AG04450 (cell line): ENCODE measurements at regions of chr6 and their contacts with region 1.

Region 1: GRCh38 chr6:18595774-18596530 is 208.8 kb downstream of the RNF144B start:
- DNase-seq: peak; percentile 36
- H3K4me3 ChIP-seq: no peak overlapping the region
- H3K27ac ChIP-seq: no peak overlapping the region
- H3K27me3 ChIP-seq: no peaks in the 10 kb centered on the region
- CTCF ChIP-seq: peak; percentile 99

Region 2: GRCh38 chr6:18503593-18504231 is 92.2 kb before region 1 on chr6:
- CTCF ChIA-PET with region 1: no interaction called
- POLR2A ChIA-PET with region 1: no interaction called
- DNase-seq: peak; percentile 66
- H3K4me3 ChIP-seq: no peak overlapping the region
- H3K27ac ChIP-seq: no peak overlapping the region
- H3K27me3 ChIP-seq: no peaks in the 10 kb centered on the region
- CTCF ChIP-seq: peak; percentile 99

Region 3: DNA sequence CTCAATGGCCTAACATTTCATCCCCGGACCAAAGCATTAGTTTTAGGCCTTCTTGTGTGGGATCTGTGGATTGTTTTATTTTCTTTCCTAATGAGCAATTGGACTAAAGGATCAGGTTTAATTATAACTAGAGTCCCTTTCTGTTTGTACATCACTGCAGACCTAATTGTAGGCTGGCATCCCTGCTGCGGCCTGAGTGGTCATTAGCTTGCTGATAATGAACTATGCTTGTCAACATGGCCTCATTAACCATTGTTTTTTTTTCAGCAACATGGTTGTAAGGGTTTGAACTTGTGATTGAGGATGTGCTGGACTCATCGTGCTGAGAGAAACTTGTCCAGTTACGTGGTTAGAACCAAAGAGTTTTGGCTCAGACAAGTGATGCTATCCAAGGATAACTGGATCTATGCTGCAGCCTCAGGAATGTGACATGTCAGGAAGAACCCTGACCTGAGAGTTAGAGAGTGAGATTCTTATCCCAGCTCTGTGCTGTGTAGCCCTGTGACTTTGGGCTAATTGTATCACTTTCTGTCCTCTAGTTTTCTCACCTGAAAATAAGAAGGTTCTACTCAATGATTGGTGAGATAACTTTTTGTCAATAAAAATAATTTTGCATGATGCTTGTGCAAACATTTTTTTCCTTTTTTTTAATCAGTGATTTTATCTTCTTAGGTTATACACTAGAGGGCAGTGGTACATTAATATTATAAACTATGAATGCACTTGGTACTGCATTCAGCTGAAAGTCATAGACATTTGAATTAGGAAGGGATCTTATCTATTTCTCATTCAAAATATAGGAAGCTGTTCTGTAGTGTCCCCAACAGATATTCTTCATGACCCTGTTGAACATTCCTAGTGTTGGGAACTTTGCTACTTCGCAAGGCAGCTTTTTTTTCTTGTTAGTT is 67.9 kb before region 1 on chr6:
- CTCF ChIA-PET with region 1: interaction called, 14 read pairs
- POLR2A ChIA-PET with region 1: no interaction called
- DNase-seq: no peak
- H3K4me3 ChIP-seq: no peak overlapping the region
- H3K27ac ChIP-seq: no peak overlapping the region
- H3K27me3 ChIP-seq: peaks cover 2% of the 10 kb centered on the region
- CTCF ChIP-seq: peak; percentile 28; the same call in 1 of the 2 replicates

Region 4: DNA sequence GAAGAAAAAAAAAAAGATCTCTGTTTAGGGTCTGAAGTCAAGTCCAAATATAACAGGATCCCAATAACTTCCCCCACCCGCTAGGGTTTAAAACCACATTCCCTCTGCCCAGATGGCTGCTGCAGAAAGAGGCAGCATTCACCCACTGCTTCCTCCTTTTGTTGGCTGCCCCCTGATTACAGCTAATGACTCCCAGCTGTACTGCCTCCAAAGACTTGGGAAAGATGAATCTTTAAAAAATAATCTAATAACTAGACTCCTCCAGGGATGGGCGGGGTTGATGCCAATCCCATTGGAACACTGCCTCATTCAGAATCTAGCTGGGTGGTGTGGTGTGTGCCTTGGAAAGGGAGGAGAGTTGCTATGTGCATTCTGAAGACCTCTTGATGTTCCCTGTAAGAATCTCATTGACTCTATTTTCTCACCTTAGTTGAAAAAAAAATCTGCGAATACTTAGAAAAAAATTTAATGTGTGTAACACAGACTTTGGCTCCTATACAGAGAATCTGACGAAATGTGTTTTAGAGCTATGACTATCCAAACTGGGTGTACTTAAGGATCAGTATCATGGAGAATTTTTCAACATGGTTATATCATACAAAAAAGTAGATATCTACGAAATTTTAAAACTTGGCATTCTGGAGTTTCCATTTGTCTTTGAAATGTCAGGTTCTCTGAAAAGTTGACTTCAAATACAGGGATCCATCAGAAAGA is 34.8 kb before region 1 on chr6:
- CTCF ChIA-PET with region 1: no interaction called
- POLR2A ChIA-PET with region 1: no interaction called
- DNase-seq: no peak
- H3K4me3 ChIP-seq: no peak overlapping the region
- H3K27ac ChIP-seq: no peak overlapping the region
- H3K27me3 ChIP-seq: no peaks in the 10 kb centered on the region
- CTCF ChIP-seq: no peak